WTC11 (cell line): ENCODE measurements at regions of chr1 and their contacts with region 1.

Region 1: GRCh38 chr1:168603501-168604110 is 27.2 kb downstream of the XCL1 start:
- DNase-seq: peak; percentile 85
- ATAC-seq: peak; percentile 97
- H3K4me3 Mint-ChIP-seq: no peak overlapping the region
- H3K27ac Mint-ChIP-seq: no peak overlapping the region
- H3K4me1 Mint-ChIP-seq: peaks cover 3% of the 10 kb centered on the region
- H3K27me3 Mint-ChIP-seq: no peaks in the 10 kb centered on the region
- CTCF ChIP-seq: peak; percentile 77

Region 2: DNA sequence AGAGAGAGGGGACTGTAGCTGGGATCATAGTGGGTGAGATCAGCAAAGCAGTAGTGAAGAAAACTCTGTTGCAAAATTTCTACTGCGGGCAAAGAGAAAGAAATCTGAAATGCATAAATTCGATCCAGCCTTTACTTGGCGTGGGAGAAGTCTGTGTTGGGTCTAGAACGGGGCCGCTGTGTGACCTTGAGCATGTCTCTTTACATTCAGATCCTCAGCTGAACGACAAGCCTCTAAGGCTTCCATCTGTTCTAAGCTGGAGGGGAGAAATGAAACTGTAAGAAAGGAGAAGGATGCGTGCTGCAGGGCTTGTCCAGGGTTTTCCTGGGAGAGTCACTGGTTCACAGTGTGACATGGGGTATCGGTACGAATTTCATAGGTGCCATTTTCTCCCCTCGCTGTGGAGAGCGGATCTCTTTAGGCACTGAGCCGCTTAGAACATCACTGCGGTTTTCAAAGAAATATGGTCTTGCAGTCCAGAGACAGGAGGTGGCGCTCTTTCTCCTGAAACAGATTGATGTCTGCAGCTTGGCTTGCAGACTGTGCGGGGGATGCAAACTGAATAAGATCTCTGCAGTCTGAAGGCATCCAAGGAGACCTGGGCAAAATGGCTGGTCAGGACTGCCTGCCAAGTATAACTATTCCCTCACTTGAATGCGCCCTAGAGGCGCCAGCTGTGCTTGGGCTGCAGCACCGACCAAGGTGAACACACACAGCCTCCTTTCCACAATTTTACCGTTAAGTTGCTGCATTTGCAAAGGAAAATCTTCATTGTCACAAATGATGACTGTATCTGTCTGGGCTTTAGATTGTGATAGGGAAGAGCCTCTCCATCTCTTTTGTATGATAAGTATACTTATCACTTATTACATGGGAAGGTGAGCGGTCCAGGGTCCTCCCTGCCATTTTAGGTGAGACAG is 163.9 kb before region 1 on chr1:
- CTCF ChIA-PET with region 1: interaction called, 17 read pairs
- POLR2A ChIA-PET with region 1: no interaction called
- DNase-seq: peak; percentile 85
- ATAC-seq: peak; percentile 98
- H3K4me3 Mint-ChIP-seq: peak overlapping the region; percentile 37; the same call in 1 of the 2 replicates
- H3K27ac Mint-ChIP-seq: no peak overlapping the region
- H3K4me1 Mint-ChIP-seq: peaks cover 10% of the 10 kb centered on the region
- H3K27me3 Mint-ChIP-seq: no peaks in the 10 kb centered on the region
- CTCF ChIP-seq: peak; percentile 77

Region 3: GRCh38 chr1:168617974-168618750 is 14.6 kb after region 1 on chr1:
- CTCF ChIA-PET with region 1: interaction called, 15 read pairs
- POLR2A ChIA-PET with region 1: no interaction called
- DNase-seq: no peak
- ATAC-seq: no peak
- H3K4me3 Mint-ChIP-seq: no peak overlapping the region
- H3K27ac Mint-ChIP-seq: no peak overlapping the region
- H3K4me1 Mint-ChIP-seq: 0 out of 2 replicates have a peak, but pooled peaks cover 4% of the 10 kb centered on the region
- H3K27me3 Mint-ChIP-seq: no peaks in the 10 kb centered on the region; the same call in 1 of the 2 replicates
- CTCF ChIP-seq: no peak

Region 4: GRCh38 chr1:168637350-168637991 is 33.9 kb after region 1 on chr1:
- CTCF ChIA-PET with region 1: interaction called, 17 read pairs
- POLR2A ChIA-PET with region 1: no interaction called
- DNase-seq: no peak
- ATAC-seq: peak; percentile 94
- H3K4me3 Mint-ChIP-seq: no peak overlapping the region
- H3K27ac Mint-ChIP-seq: no peak overlapping the region
- H3K4me1 Mint-ChIP-seq: peaks cover 3% of the 10 kb centered on the region; the same call in 1 of the 2 replicates
- H3K27me3 Mint-ChIP-seq: no peaks in the 10 kb centered on the region; the same call in 1 of the 2 replicates
- CTCF ChIP-seq: peak; percentile 66

Region 5: GRCh38 chr1:168734946-168735345 is 131.3 kb after region 1 on chr1:
- CTCF ChIA-PET with region 1: no interaction called
- POLR2A ChIA-PET with region 1: no interaction called
- DNase-seq: no peak
- ATAC-seq: no peak
- H3K4me3 Mint-ChIP-seq: no peak overlapping the region
- H3K27ac Mint-ChIP-seq: no peak overlapping the region
- H3K4me1 Mint-ChIP-seq: no peaks in the 10 kb centered on the region
- H3K27me3 Mint-ChIP-seq: no peaks in the 10 kb centered on the region
- CTCF ChIP-seq: no peak

Region 6: GRCh38 chr1:169106095-169106920 is 502.7 kb after region 1 on chr1 and contains the start of gene ATP1B1:
- CTCF ChIA-PET with region 1: interaction called, 10 read pairs
- POLR2A ChIA-PET with region 1: interaction called, 3 read pairs
- DNase-seq: peak; percentile 93
- ATAC-seq: peak; percentile 87
- H3K4me3 Mint-ChIP-seq: peak within 1 kb of the TSS; percentile 89
- H3K27ac Mint-ChIP-seq: peak within 1 kb of the TSS; percentile 82
- H3K4me1 Mint-ChIP-seq: peaks cover 44% of the 10 kb centered on the region
- H3K27me3 Mint-ChIP-seq: no peaks in the 10 kb centered on the region; the same call in none of the 2 replicates
- CTCF ChIP-seq: peak; percentile 59
- total RNA-seq, gene ATP1B1: 40.7 to 41.9 TPM (median 41.8 TPM) in 3 replicates

Region 7: DNA sequence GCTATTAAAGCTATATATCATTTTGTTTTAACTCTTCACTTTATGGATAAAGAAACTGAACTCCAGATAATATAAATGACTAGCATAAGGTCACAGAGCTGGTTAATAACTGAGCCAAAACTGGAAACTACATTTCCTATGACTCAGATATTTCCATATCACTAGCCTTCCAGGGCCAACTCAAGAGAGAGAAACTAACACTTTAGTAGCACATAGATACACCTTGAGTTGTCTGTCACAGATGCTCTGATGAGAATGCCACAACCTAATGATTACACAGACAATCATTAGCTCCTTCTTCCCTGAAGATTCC is 723.3 kb after region 1 on chr1:
- CTCF ChIA-PET with region 1: interaction called, 10 read pairs
- POLR2A ChIA-PET with region 1: no interaction called
- DNase-seq: no peak
- ATAC-seq: no peak
- H3K4me3 Mint-ChIP-seq: no peak overlapping the region
- H3K27ac Mint-ChIP-seq: no peak overlapping the region
- H3K4me1 Mint-ChIP-seq: peaks cover 19% of the 10 kb centered on the region
- H3K27me3 Mint-ChIP-seq: no peaks in the 10 kb centered on the region; the same call in 1 of the 2 replicates
- CTCF ChIP-seq: no peak

Region 8: DNA sequence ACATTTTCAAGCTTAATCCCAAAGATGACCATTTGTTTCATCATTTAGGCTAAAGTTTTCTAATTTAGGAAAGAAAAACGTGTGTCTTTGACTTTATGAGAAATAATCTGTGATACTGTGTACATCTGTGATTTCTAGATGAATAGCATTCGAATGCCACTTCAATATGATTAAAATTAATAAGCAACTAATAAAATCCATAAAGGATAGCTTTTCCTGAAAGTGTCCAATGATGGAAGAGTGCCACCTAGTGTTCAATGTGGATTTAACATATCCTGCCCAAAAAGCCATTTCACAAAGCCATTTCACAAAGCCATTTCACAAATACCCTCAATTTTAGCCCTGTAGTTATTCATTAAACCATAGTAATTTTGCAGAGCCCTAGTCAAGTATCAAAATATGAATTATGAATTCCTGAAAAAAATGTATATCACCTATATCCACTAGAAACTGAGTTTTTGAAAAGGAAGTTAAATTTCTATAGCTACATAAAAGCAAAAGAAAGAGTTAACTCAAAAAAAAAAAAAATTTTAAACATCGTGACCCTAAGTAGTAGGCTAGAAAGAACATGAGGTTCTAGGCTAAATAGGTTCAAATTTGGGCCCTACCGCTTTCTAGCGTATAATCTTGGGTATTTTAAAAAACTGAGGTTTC is 744.9 kb after region 1 on chr1:
- CTCF ChIA-PET with region 1: interaction called, 33 read pairs
- POLR2A ChIA-PET with region 1: no interaction called
- DNase-seq: no peak
- ATAC-seq: no peak
- H3K4me3 Mint-ChIP-seq: no peak overlapping the region
- H3K27ac Mint-ChIP-seq: no peak overlapping the region
- H3K4me1 Mint-ChIP-seq: no peaks in the 10 kb centered on the region
- H3K27me3 Mint-ChIP-seq: no peaks in the 10 kb centered on the region
- CTCF ChIP-seq: peak; percentile 63; the same call in 1 of the 2 replicates